Activated B cell treated with CpG ODN at 0.5 μM for 24 hours (primary cell): ENCODE measurements at regions of chr20 and their contacts with region 1.

Region 1: DNA sequence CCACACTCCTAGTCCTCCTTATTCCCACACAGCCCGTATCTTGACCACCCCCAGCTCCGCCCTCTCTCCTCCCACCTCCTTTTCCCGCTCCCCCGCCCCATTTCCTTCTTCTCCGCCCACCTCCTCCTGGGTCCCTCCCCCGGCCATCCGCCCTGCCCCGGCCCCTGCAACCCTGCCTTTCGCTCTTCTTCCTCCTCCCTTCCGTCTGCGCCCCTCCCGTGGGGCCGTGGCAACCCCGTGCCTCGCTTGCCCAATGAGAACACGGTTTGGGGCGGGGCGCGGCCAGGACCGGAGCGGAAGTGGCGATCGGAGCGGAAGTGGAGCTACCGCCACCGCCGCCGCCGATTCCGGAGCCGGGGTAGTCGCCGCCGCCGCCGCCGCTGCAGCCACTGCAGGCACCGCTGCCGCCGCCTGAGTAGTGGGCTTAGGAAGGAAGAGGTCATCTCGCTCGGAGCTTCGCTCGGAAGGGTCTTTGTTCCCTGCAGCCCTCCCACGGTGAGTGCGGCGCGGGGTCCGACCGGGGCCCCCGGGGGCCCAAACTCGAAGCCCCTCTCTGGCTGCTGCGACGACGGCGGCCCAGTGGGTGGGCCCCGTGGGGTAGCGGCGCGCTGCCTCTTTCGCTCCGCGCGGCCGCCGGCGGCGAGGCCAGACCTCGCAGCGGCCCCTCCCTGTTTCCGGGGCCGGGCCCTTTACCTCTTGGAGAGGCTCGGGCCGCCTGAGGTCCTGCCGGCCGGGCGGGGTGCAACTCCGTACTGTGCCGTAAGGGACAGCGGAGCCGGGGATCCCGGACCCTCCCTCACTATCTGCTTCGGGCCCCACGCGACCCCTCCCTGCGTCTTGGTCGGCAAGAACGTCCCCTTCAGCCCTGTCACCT is at the start of gene YWHAB:
- DNase-seq: peak; percentile 96
- ATAC-seq: peak; percentile 98
- H3K4me3 Mint-ChIP-seq: peak within 1 kb of the TSS; percentile 94
- H3K27ac Mint-ChIP-seq: peak within 1 kb of the TSS; percentile 91
- H3K4me1 Mint-ChIP-seq: peaks cover 60% of the 10 kb centered on the region
- H3K27me3 Mint-ChIP-seq: no peaks in the 10 kb centered on the region
- CTCF ChIP-seq: no peak
- total RNA-seq, gene YWHAB: 234 and 246 TPM in 2 replicates

Region 2: GRCh38 chr20:43456809-43457639 is 1428.6 kb before region 1 on chr20:
- CTCF ChIA-PET with region 1: no interaction called
- POLR2A ChIA-PET with region 1: no interaction called
- intact Hi-C with region 1: loop called (anchors 5 kb)
- DNase-seq: no peak
- ATAC-seq: peak; percentile 83
- H3K4me3 Mint-ChIP-seq: peak overlapping the region; percentile 95
- H3K27ac Mint-ChIP-seq: peak overlapping the region; percentile 98
- H3K4me1 Mint-ChIP-seq: peaks cover 31% of the 10 kb centered on the region
- H3K27me3 Mint-ChIP-seq: peaks cover 5% of the 10 kb centered on the region
- CTCF ChIP-seq: no peak

Region 3: GRCh38 chr20:44521484-44522481 is 363.8 kb before region 1 on chr20 and contains the start of gene SERINC3:
- CTCF ChIA-PET with region 1: no interaction called
- POLR2A ChIA-PET with region 1: no interaction called
- intact Hi-C with region 1: loop called (anchors 1 kb)
- DNase-seq: peak; percentile 97
- ATAC-seq: peak; percentile 98
- H3K4me3 Mint-ChIP-seq: peak within 1 kb of the TSS; percentile 89
- H3K27ac Mint-ChIP-seq: peak within 1 kb of the TSS; percentile 83
- H3K4me1 Mint-ChIP-seq: peaks cover 44% of the 10 kb centered on the region
- H3K27me3 Mint-ChIP-seq: no peaks in the 10 kb centered on the region
- CTCF ChIP-seq: no peak
- total RNA-seq, gene SERINC3: 38.1 and 41.4 TPM in 2 replicates

Region 4: GRCh38 chr20:44896583-44896982 is 11.0 kb after region 1 on chr20:
- CTCF ChIA-PET with region 1: interaction called, 3 read pairs
- POLR2A ChIA-PET with region 1: interaction called, 3 read pairs
- intact Hi-C with region 1: loop called (anchors 1 kb)
- DNase-seq: no peak
- ATAC-seq: no peak
- H3K4me3 Mint-ChIP-seq: no peak overlapping the region
- H3K27ac Mint-ChIP-seq: no peak overlapping the region
- H3K4me1 Mint-ChIP-seq: peaks cover 80% of the 10 kb centered on the region
- H3K27me3 Mint-ChIP-seq: no peaks in the 10 kb centered on the region
- CTCF ChIP-seq: no peak

Region 5: DNA sequence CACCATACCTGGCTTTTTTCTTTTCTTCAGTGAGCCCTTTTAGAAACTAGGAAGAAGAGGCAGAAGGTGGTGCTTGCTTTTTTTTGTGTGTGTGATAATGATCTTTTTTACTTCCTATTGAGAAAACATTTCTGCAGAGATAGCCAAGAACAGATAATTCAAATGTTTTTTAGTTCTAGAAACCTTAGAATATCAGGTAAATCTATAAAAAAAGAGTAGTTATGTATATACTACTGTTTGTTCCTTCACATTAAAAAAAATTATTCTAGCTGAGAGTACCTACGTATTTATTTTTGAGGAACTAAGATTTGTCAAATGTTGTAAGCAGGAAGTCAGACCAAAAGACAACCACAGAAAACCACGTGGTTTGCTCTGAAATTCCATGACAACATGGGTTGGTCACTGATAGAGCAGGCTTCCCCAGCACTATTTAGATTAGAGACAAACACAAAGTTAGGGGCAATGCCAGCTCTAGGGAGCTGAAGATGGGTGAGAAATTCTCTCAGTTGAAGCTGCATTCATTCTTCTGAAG is 93.5 kb after region 1 on chr20:
- CTCF ChIA-PET with region 1: interaction called, 3 read pairs
- POLR2A ChIA-PET with region 1: interaction called, 12 read pairs
- intact Hi-C with region 1: no loop called
- DNase-seq: no peak
- ATAC-seq: peak; percentile 91
- H3K4me3 Mint-ChIP-seq: peak overlapping the region; percentile 59
- H3K27ac Mint-ChIP-seq: peak overlapping the region; percentile 97
- H3K4me1 Mint-ChIP-seq: peaks cover 79% of the 10 kb centered on the region
- H3K27me3 Mint-ChIP-seq: no peaks in the 10 kb centered on the region
- CTCF ChIP-seq: no peak

Region 6: GRCh38 chr20:45036044-45036755 is 150.6 kb after region 1 on chr20:
- CTCF ChIA-PET with region 1: no interaction called
- POLR2A ChIA-PET with region 1: no interaction called
- intact Hi-C with region 1: no loop called
- DNase-seq: no peak
- ATAC-seq: peak; percentile 31
- H3K4me3 Mint-ChIP-seq: no peak overlapping the region
- H3K27ac Mint-ChIP-seq: peak overlapping the region; percentile 66
- H3K4me1 Mint-ChIP-seq: peaks cover 57% of the 10 kb centered on the region
- H3K27me3 Mint-ChIP-seq: no peaks in the 10 kb centered on the region
- CTCF ChIP-seq: no peak

Region 7: DNA sequence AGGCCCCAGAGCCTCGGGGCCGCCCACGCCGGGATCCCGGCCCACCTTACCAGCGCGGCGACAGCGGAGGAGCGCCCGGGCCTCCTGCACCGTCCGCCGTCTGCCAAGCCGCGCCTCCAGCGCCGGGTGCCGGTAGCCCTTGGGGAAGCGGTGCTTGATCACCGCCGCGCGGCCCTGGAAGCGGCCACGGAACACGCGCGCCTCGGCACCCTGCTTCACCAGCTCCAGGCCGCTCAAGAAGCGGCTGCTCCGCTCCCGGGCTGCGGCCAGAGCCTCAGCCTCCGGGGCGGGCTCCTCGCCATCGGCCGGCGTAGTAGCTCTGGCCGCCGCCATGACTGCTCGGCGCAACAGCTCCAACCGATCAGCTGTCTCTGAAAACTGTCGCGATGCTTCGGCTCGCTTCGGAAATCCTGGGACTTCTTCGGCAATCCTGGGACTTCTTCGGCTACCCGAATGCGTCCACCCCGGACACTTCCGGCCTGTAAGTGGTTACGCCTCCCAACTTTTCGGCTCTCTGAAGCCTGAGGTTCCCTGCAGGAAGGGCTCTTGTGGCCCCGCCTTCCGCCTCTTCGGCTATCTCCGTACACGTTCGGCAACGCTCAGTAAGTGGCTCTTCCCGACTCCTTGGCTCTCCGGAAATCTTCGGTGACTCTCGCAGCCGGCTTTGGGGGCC is 1803.6 kb after region 1 on chr20 and contains the start of gene TP53RK:
- CTCF ChIA-PET with region 1: no interaction called
- POLR2A ChIA-PET with region 1: no interaction called
- intact Hi-C with region 1: loop called (anchors 10 kb)
- DNase-seq: peak; percentile 89
- ATAC-seq: peak; percentile 97
- H3K4me3 Mint-ChIP-seq: peak within 1 kb of the TSS; percentile 97
- H3K27ac Mint-ChIP-seq: peak within 1 kb of the TSS; percentile 95
- H3K4me1 Mint-ChIP-seq: peaks cover 43% of the 10 kb centered on the region
- H3K27me3 Mint-ChIP-seq: no peaks in the 10 kb centered on the region
- CTCF ChIP-seq: no peak
- total RNA-seq, gene TP53RK: 18.6 and 18.8 TPM in 2 replicates